Right ventricle myocardium inferior (tissue), 1 donor: ENCODE measurements at regions of chr12 and their contacts with region 1.

Region 1: GRCh38 chr12:6927379-6928024 is at the start of gene ATN1:
- DNase-seq: peak; percentile 90
- ATAC-seq: peak; percentile 70
- total RNA-seq, gene ATN1: 78.9 TPM

Region 2: GRCh38 chr12:6839482-6840201 is 87.9 kb before region 1 on chr12:
- intact Hi-C with region 1: no loop called
- DNase-seq: peak; percentile 30
- ATAC-seq: no peak

Region 3: GRCh38 chr12:6904280-6905278 is 22.9 kb before region 1 on chr12 and contains the start of gene LRRC23:
- intact Hi-C with region 1: loop called (anchors 2 kb)
- DNase-seq: peak; percentile 98
- ATAC-seq: peak; percentile 98
- total RNA-seq, gene LRRC23: 9.4 TPM

Region 4: DNA sequence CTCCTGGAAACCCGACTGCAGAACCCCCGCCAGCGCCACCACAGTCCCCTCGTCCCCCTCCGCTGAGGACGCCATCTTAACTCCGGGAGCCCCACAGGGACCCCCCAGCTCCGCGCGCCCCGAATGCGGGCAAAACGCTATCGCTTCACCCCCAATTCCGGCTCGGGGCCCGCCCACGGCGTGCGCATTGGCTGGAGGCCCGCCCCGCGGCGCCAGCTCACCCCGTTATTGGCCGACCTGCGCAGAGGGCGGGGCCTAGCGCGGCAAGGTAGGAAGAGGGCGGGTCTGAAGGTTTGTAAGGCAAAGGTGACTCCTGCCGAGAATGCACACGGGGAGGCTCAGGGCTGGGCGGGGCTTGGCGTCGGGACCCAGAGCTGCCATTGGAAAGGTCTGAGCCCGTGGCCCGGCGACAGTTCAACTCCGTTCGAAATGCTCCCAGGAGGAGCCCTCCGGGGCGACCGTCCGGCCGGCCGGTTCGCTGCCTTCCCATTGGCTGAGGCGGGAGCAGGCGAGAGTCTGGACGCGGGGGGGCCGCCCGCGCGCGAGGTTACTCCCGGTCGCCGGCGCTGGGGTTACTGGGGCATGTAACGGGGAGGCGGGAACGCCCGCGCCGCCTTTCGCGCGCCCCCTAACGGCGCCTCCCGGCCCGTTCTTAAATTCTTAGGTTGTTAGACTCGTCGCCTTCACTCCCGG is 91.0 kb after region 1 on chr12 and contains the start of gene LPCAT3:
- intact Hi-C with region 1: loop called (anchors 5 kb)
- DNase-seq: peak; percentile 99
- ATAC-seq: peak; percentile 97
- total RNA-seq, gene LPCAT3: 54.7 TPM

Region 5: GRCh38 chr12:7035463-7035862 is 108.0 kb after region 1 on chr12:
- intact Hi-C with region 1: no loop called
- DNase-seq: no peak
- ATAC-seq: no peak

Region 6: DNA sequence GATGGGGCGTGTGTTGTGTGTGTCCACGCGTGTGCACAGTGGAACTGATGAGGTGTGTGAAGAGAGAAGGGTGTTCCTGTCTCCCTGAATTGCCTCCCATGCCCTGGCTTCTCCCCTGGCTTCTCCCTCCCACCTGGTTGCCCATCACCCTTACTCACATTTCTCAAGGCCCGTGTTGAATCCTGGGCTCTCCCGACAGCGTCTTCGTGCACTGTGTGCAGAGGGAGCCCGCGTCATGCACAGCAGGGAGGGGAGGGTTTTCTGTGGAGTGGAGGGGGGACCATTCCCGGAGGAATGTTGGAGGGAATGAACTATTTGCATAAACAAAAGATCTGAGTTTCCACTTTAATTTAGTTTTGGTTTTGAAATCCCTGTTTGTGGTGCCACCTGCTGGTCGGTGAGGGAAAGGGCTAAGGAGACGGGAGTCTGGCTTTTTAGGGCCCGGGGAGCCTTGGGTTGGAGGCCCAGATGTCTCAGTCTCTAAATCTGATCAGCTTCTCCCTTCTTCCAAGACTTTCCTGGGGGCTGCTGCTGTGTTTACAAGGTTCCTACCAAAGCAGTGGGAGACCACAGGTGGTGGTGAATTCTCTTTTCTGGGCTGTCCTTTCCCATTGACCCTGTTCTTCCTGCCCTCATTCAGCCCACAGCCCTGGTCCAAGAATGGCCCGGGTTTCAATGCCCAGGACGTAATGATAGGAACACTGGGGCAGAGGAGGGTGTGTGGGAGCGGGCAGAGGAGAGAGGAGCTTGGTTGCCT is 164.9 kb after region 1 on chr12 and contains the start of gene C1R:
- intact Hi-C with region 1: loop called (anchors 2 kb)
- DNase-seq: peak; percentile 86
- ATAC-seq: peak; percentile 85
- total RNA-seq, gene C1R: 227 TPM

Region 7: GRCh38 chr12:7108796-7109571 is 181.5 kb after region 1 on chr12 and contains the start of gene C1RL:
- intact Hi-C with region 1: loop called (anchors 5 kb)
- DNase-seq: peak; percentile 96
- ATAC-seq: peak; percentile 89
- total RNA-seq, gene C1RL: 14.4 TPM

Region 8: DNA sequence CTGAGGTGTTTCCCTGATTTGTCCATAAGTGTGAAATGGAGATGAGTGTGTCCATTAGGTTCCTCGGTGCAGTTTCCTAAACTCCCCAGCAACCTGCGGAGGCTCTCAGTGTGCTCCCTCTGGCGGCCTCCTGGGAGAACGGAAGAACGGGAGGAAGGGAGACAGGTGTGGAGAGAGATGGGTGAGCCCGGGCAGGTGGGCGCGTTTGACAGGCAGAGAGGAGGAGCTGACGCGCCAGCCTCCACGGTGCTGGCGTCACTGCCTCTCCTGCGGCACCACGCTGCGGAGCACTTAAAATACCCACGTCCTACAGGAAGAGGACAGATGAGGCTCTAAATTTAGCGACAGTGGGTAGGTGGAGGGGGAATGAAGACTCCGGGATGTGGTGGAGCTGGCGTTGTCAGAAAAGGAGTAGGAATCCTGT is 235.2 kb after region 1 on chr12:
- intact Hi-C with region 1: no loop called
- DNase-seq: no peak
- ATAC-seq: peak; percentile 42